ENCODE measurements at regions of chr11 and their contacts with region 1.

Region 1: DNA sequence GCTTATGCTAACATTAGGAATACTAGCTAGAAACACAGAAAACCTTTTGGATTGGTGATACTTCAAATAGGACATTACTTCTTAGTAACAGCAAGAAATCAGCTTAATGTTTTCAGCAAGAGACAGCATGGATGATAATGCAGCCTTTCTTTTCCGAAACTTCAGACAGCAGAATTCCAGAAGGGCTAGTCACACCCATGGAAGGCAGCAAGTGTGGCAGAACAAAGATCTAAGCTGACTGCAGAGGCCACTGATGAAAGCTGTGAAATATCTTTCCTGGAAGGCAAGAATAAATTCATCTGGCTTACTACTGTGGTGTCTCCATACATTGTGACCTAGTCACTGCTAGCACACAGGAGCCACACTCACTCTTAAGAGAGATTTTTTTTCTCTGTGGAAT is 100.3 kb downstream of the CCDC83 start:
- DNase-seq: no peak
- H3K4me3 ChIP-seq: no peak overlapping the region
- H3K27me3 ChIP-seq: no peaks in the 10 kb centered on the region
- CTCF ChIP-seq: no peak

Region 2: GRCh38 chr11:85752890-85753581 is 202.5 kb before region 1 on chr11:
- CTCF ChIA-PET with region 1: no interaction called
- POLR2A ChIA-PET with region 1: no interaction called
- DNase-seq: no peak
- H3K4me3 ChIP-seq: no peak overlapping the region
- H3K27me3 ChIP-seq: no peaks in the 10 kb centered on the region
- CTCF ChIP-seq: no peak

Region 3: DNA sequence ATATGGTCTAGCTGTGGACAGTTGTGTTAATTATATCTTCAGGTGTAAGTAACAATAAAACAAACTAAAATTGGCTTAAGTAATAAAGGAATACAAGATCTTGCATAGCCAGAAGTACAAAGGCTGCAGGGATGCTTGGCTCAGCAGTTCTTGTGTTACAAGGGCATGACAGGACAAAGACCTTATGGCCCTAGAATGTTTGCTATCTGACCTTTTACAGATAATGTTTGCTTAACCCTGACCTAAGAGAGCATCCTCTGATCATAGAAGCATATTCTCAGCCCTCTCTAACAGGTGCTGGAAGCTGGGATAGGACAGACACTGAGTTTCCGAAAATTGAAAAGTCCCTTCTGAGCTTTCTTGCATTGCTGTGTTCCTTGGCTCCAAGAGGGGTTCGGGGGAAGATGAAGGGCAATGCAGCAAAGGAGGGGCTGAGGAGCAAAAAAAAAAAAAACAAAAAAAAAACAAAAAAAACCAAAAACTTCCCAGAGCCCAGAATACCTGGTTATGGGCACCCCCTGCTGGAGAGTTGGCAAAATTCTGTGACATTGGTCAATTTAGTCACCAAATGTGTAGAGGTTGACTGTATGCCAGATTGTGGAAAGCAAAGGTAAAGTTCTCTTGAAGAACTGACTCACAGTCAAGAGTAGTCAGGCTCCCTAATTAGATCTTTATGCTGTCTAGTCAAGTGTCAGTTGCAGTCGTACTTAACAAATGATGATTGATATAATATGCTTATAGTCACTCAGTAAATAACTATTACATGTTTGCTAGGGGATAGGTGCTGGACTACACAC is 336.1 kb after region 1 on chr11:
- CTCF ChIA-PET with region 1: no interaction called
- POLR2A ChIA-PET with region 1: interaction called, 14 read pairs
- DNase-seq: no peak
- H3K4me3 ChIP-seq: no peak overlapping the region
- H3K27me3 ChIP-seq: no peaks in the 10 kb centered on the region
- CTCF ChIP-seq: peak; percentile 67

Region 4: GRCh38 chr11:86671682-86672621 is 716.4 kb after region 1 on chr11 and contains the start of gene ME3:
- CTCF ChIA-PET with region 1: no interaction called
- POLR2A ChIA-PET with region 1: interaction called, 11 read pairs
- DNase-seq: no peak
- H3K4me3 ChIP-seq: peak within 1 kb of the TSS; percentile 54
- H3K27me3 ChIP-seq: no peaks in the 10 kb centered on the region
- CTCF ChIP-seq: no peak
- polyA plus RNA-seq, gene ME3: 9.7 and 15.8 TPM in 2 replicates

Measured in BJ (cell line).